SK-N-SH (cell line): ENCODE measurements at regions of chr17 and their contacts with region 1.

Region 1: GRCh38 chr17:409848-410545 is 57.4 kb upstream of the RPH3AL start:
- DNase-seq: peak; percentile 98
- H3K4me3 ChIP-seq: peak overlapping the region; percentile 74 to 94
- H3K27ac ChIP-seq: peak overlapping the region; percentile 55 to 68
- H3K4me1 ChIP-seq: peaks cover 0 to 11% of the 10 kb centered on the region in 2 experiments; a peak in 1 of 4 replicates
- H3K27me3 ChIP-seq: no peaks in the 10 kb centered on the region
- CTCF ChIP-seq: no peak
- EP300 ChIP-seq: no peak
- RAD21 ChIP-seq: no peak

Region 2: GRCh38 chr17:444879-445454 is 35.0 kb after region 1 on chr17:
- CTCF ChIA-PET with region 1: interaction called, 13 read pairs
- POLR2A ChIA-PET with region 1: no interaction called
- DNase-seq: no peak
- H3K4me3 ChIP-seq: no peak overlapping the region
- H3K27ac ChIP-seq: no peak overlapping the region
- H3K4me1 ChIP-seq: no peaks in the 10 kb centered on the region; a peak in 1 of 4 replicates
- H3K27me3 ChIP-seq: no peaks in the 10 kb centered on the region
- CTCF ChIP-seq: no peak
- EP300 ChIP-seq: no peak
- RAD21 ChIP-seq: no peak

Region 3: GRCh38 chr17:497241-498034 is 87.4 kb after region 1 on chr17:
- CTCF ChIA-PET with region 1: interaction called, 14 read pairs
- POLR2A ChIA-PET with region 1: no interaction called
- DNase-seq: no peak
- H3K4me3 ChIP-seq: no peak overlapping the region
- H3K27ac ChIP-seq: no peak overlapping the region
- H3K4me1 ChIP-seq: no peaks in the 10 kb centered on the region; a peak in 1 of 4 replicates
- H3K27me3 ChIP-seq: no peaks in the 10 kb centered on the region
- CTCF ChIP-seq: no peak
- EP300 ChIP-seq: no peak
- RAD21 ChIP-seq: no peak

Region 4: DNA sequence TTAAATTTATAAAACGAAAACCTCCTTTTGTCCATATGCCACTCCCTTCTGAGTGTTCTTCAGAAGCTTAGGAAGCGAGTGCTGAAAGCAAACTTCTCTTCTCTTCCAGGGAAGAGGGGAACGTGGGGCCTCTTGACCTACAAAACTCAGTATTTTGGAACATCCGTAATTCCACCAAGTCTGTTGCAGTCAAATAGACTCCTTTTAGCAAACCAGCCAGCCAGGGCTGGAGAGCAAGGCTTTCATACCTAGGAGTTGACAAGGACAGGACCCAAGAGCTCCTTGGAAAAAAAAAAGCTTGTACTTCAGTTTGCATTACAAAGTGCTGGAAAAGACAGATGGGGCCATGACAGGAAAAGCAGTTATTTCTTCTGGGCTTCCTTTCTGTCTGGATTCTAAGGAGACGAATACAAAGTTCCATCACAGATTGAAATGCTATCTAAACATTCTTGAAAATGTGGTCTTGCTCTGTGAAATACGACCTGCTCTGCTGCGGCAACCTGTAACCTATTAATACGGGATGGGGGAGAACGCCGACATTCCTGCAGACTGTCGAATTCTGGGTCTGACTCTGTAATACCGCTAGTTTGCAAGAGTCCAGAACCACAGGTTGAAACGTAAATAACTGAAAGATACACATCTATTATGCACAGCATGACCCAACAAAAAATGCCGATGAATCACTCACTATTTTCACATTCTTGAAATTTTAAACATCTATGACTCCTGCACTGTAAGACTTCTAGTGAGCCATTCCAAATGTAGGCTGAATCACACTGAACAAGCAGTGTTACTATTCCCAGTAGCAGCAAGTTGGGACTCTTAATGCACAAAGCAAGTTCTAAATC is 284.0 kb after region 1 on chr17:
- CTCF ChIA-PET with region 1: interaction called, 255 read pairs
- POLR2A ChIA-PET with region 1: no interaction called
- DNase-seq: no peak
- H3K4me3 ChIP-seq: peak overlapping the region in 1 of 2 experiments; percentile 16; a peak in 1 of 4 replicates
- H3K27ac ChIP-seq: peak overlapping the region; percentile 45 to 88; a peak in 3 of 4 replicates
- H3K4me1 ChIP-seq: peaks cover 17 to 28% of the 10 kb centered on the region in 2 experiments; a peak in 3 of 4 replicates
- H3K27me3 ChIP-seq: no peaks in the 10 kb centered on the region
- CTCF ChIP-seq: no peak
- EP300 ChIP-seq: peak in 1 of 2 experiments; percentile 88; a peak in 2 of 4 replicates
- RAD21 ChIP-seq: no peak

Region 5: GRCh38 chr17:732067-732901 is 322.3 kb after region 1 on chr17 and contains the start of gene TLCD3A:
- CTCF ChIA-PET with region 1: interaction called, 11 read pairs
- POLR2A ChIA-PET with region 1: no interaction called
- DNase-seq: peak; percentile 95
- H3K4me3 ChIP-seq: peak within 1 kb of the TSS; percentile 68 to 85
- H3K27ac ChIP-seq: peak within 1 kb of the TSS; percentile 41 to 77; a peak in 3 of 4 replicates
- H3K4me1 ChIP-seq: peaks cover 0 to 8% of the 10 kb centered on the region in 2 experiments; a peak in 1 of 4 replicates
- H3K27me3 ChIP-seq: no peaks in the 10 kb centered on the region
- CTCF ChIP-seq: no peak
- EP300 ChIP-seq: no peak
- RAD21 ChIP-seq: no peak
- polyA plus RNA-seq, gene TLCD3A: 31.7 and 34.4 TPM in 2 replicates